Activated CD8-positive, alpha-beta T cell treated with anti-CD3 and anti-CD28 coated beads for 36 hours (primary cell): ENCODE measurements at regions of chr3 and their contacts with region 1.

Region 1: GRCh38 chr3:122092460-122093165 is 37.5 kb downstream of the CD86 start:
- DNase-seq: peak; percentile 81
- ATAC-seq: peak; percentile 99
- H3K4me3 Mint-ChIP-seq: no peak overlapping the region
- H3K27ac Mint-ChIP-seq: peak overlapping the region; percentile 55
- H3K4me1 Mint-ChIP-seq: peaks cover 15% of the 10 kb centered on the region
- H3K27me3 Mint-ChIP-seq: peaks cover 2% of the 10 kb centered on the region
- CTCF ChIP-seq: peak; percentile 67

Region 2: DNA sequence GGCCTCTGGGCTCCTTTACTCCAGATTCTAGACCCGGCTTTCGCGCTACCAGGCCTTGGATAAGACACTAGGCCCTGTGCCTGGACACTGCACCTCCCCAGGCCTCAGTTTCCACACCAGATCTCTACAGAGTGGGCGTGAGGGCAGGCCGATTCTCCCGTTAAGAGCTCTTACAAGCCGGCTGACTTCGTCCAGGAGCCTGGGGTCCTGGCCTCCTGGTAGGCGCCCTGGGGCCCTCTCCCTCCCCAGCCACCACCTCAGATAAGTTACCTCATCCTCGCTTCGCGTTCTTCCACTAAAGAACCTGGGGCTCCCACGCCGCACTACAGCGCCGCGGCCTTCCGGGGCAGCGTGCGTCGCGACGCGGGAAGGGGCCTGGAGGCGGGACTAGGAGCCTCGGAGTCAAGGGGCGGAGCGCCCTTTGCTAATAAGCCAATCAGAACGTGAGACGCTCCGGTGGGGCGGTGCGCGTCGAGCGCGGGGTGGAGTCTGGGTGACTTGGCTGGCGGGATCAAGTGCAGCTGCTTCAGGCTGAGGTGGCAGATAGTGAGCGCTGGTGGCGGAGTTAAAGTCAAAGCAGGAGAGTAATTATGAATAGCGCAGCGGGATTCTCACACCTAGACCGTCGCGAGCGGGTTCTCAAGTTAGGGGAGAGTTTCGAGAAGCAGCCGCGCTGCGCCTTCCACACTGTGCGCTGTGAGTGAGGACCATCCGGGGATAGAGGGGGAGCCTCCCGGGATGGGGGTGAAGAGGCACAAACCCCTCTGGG is 257.7 kb before region 1 on chr3 and contains the starts of genes EAF2 and IQCB1:
- CTCF ChIA-PET with region 1: no interaction called
- POLR2A ChIA-PET with region 1: no interaction called
- intact Hi-C with region 1: loop called (anchors 5 kb)
- DNase-seq: peak; percentile 97
- ATAC-seq: peak; percentile 99
- H3K4me3 Mint-ChIP-seq: peak within 1 kb of the TSS; percentile 85
- H3K27ac Mint-ChIP-seq: peak within 1 kb of the TSS; percentile 89
- H3K4me1 Mint-ChIP-seq: peaks cover 45% of the 10 kb centered on the region
- H3K27me3 Mint-ChIP-seq: no peaks in the 10 kb centered on the region
- CTCF ChIP-seq: no peak
- total RNA-seq, gene EAF2: 13.4 to 14.4 TPM
- total RNA-seq, gene IQCB1: 45.4 to 51.6 TPM

Region 3: DNA sequence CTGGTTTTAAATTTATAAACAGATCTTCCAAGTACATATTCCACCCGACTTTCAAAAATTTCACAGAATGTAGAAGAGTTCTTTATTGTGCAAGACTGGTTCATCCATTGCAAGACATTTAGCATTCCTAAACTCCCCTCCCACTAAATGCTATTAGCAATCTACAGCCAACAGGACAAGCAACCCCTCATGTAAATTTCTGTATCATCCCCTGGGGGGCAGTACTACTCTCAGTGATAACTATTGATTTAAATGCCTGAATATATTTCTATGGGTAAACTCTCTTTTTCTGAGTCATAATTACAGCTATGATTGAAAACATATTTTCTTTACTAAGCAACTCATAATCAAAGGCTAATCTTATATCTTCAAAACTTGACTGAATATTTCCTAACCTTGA is 209.1 kb before region 1 on chr3:
- CTCF ChIA-PET with region 1: no interaction called
- POLR2A ChIA-PET with region 1: no interaction called
- intact Hi-C with region 1: loop called (anchors 10 kb)
- DNase-seq: peak; percentile 5
- ATAC-seq: no peak
- H3K4me3 Mint-ChIP-seq: no peak overlapping the region
- H3K27ac Mint-ChIP-seq: no peak overlapping the region
- H3K4me1 Mint-ChIP-seq: no peaks in the 10 kb centered on the region
- H3K27me3 Mint-ChIP-seq: no peaks in the 10 kb centered on the region
- CTCF ChIP-seq: peak; percentile 48